ENCODE measurements at regions of chr1 and their contacts with region 1.

Region 1: DNA sequence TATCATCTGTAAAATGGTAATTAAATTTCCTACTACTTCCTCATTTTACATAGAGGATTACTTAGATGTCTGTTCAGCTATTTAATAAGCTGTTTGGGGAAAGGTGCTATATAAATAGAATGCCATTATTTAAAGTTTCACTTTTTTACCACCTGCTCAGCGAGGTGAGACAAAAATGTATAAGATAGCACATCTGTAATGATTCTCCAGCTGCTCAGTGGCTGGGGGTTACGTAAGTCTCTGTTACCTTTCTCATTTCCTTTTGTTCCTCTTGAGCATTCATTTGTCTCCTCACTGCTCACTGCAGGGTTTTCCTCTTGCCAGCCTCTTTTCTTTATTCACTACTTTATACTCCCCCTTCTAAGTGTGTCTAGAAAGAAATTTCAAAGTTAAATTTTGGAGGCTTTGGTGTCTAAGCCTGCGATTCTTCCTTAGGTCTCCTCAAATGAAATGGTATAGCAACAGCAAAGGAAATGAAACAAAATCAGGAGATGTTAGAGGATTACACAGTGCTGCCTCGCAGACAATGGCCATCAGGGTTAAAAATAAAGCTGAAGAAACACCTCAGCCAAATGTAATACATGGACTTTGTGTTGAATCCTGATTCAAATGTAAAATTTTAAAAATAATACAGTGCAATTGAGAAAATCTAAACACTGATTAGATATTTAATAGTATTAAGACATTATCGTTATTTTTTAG is 6.8 kb downstream of the RGS8 start:
- DNase-seq: no peak
- ATAC-seq: no peak
- H3K4me3 ChIP-seq: no peak overlapping the region
- H3K27ac ChIP-seq: peak overlapping the region in 2 of 10 donors; percentile 46 to 65
- H3K4me1 ChIP-seq: peaks cover 2 to 67% (median 28%) of the 10 kb centered on the region in 9 donors
- H3K27me3 ChIP-seq: peaks cover 0 to 24% (median 0%) of the 10 kb centered on the region in 7 donors
- CTCF ChIP-seq: no peak

Region 2: GRCh38 chr1:182604169-182605164 is 73.1 kb before region 1 on chr1 and contains the start of gene RGS16:
- intact Hi-C with region 1: loop called in 5 of 10 experiments (anchors 5 kb)
- DNase-seq: peak; percentile 95 to 96
- ATAC-seq: peak; percentile 96 to 98 (median 97)
- H3K4me3 ChIP-seq: peak within 1 kb of the TSS; percentile 42 to 71 (median 60)
- H3K27ac ChIP-seq: peak within 1 kb of the TSS in 9 of 10 donors; percentile 15 to 75 (median 58)
- H3K4me1 ChIP-seq: peaks cover 7 to 70% (median 31%) of the 10 kb centered on the region in 9 donors
- H3K27me3 ChIP-seq: peaks cover 0 to 17% (median 0%) of the 10 kb centered on the region in 7 donors
- CTCF ChIP-seq: no peak
- total RNA-seq, gene RGS16: 0.42 to 8.7 (median 2.1) TPM

Region 3: GRCh38 chr1:182614796-182615454 is 62.6 kb before region 1 on chr1:
- intact Hi-C with region 1: loop called in 2 of 10 experiments (anchors 5 to 10 kb)
- DNase-seq: peak; percentile 83 to 91
- ATAC-seq: peak; percentile 85 to 94 (median 92)
- H3K4me3 ChIP-seq: peak overlapping the region; percentile 19 to 61 (median 56)
- H3K27ac ChIP-seq: peak overlapping the region; percentile 86 to 98 (median 92)
- H3K4me1 ChIP-seq: peaks cover 0 to 34% (median 21%) of the 10 kb centered on the region in 9 donors
- H3K27me3 ChIP-seq: peaks cover 0 to 47% (median 0%) of the 10 kb centered on the region in 7 donors
- CTCF ChIP-seq: no peak

Region 4: GRCh38 chr1:182768963-182769362 is 91.4 kb after region 1 on chr1:
- intact Hi-C with region 1: loop called in 1 of 10 experiments (anchors 10 kb)
- DNase-seq: peak in 1 of 2 donors; percentile 25
- ATAC-seq: peak in 3 of 8 donors; percentile 40 to 57 (median 52)
- H3K4me3 ChIP-seq: no peak overlapping the region
- H3K27ac ChIP-seq: no peak overlapping the region
- H3K4me1 ChIP-seq: peaks cover 0 to 33% (median 8%) of the 10 kb centered on the region in 9 donors
- H3K27me3 ChIP-seq: no peaks in the 10 kb centered on the region
- CTCF ChIP-seq: no peak

Region 5: GRCh38 chr1:182781841-182782586 is 104.5 kb after region 1 on chr1:
- intact Hi-C with region 1: loop called in 4 of 10 experiments (anchors 5 to 10 kb)
- DNase-seq: peak; percentile 69 to 79
- ATAC-seq: peak; percentile 72 to 86 (median 84)
- H3K4me3 ChIP-seq: no peak overlapping the region
- H3K27ac ChIP-seq: no peak overlapping the region
- H3K4me1 ChIP-seq: peaks cover 0 to 24% (median 3%) of the 10 kb centered on the region in 9 donors
- H3K27me3 ChIP-seq: no peaks in the 10 kb centered on the region
- CTCF ChIP-seq: peak; percentile 50 to 88 (median 83)